ENCODE measurements at regions of chr6 and their contacts with region 1.

Region 1: DNA sequence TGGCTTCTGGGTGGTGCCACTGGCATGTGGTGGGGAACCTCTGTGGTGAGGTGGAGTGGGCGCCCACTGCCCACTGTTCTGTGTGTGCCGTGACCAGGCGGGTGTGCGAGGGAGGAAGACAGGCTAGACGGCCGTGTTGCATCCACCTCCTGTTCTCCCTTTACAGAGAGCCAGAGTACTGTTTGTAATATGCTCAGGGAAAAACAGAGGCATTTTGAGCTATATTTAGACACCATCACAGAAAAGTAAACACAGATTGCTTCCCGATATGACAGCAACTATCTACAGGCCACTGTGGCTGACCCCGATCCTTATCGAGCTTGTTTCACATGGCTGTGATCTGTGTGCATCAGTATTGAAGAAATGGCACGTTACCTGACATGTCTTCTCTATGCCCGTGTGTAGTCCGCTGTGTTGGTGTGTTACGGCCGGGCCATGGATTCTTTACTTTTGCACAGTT is 45.6 kb downstream of the ARID1B start:
- DNase-seq: no peak
- ATAC-seq: no peak
- H3K4me3 ChIP-seq: no peak overlapping the region
- H3K4me3 Mint-ChIP-seq: no peak overlapping the region
- H3K27ac ChIP-seq: no peak overlapping the region
- H3K27ac Mint-ChIP-seq: no peak overlapping the region
- H3K4me1 ChIP-seq: peaks cover 4 to 41% of the 10 kb centered on the region in 2 experiments
- H3K4me1 Mint-ChIP-seq: peaks cover 88 to 97% (median 90%) of the 10 kb centered on the region in 3 donors
- H3K27me3 ChIP-seq: no peaks in the 10 kb centered on the region
- H3K27me3 Mint-ChIP-seq: no peaks in the 10 kb centered on the region

Region 2: DNA sequence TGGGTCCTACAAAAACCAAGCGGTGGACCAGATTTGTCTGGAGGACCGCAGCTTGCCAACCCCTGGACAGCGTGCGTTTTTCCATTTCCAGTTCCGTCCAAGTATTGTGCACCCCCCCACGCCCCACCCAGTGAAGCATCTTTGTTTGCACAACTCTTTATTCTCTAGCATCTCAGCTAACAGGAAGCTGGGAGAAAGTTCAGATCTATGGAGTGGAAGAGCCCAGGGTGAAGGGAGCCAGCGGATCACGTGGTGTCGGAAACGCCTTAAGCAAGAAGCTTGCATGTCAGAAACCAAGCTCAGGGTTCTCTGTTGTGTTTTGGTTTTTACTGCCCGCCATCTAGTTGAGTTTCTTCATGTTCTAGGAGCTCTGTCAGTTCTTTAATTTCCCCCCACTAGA is 15.7 kb before region 1 on chr6:
- CTCF ChIA-PET with region 1: no interaction called
- POLR2A ChIA-PET with region 1: interaction called, 9 to 16 read pairs
- DNase-seq: no peak
- ATAC-seq: peak in 1 of 4 experiments; percentile 28
- H3K4me3 ChIP-seq: no peak overlapping the region
- H3K4me3 Mint-ChIP-seq: peak overlapping the region in 2 of 3 donors; percentile 21 to 56
- H3K27ac ChIP-seq: no peak overlapping the region
- H3K27ac Mint-ChIP-seq: peak overlapping the region; percentile 39 to 52
- H3K4me1 ChIP-seq: peaks cover 24 to 34% of the 10 kb centered on the region in 2 experiments
- H3K4me1 Mint-ChIP-seq: peaks cover 90 to 94% (median 91%) of the 10 kb centered on the region in 3 donors
- H3K27me3 ChIP-seq: no peaks in the 10 kb centered on the region
- H3K27me3 Mint-ChIP-seq: no peaks in the 10 kb centered on the region

Region 3: GRCh38 chr6:156873654-156874380 is 51.0 kb after region 1 on chr6:
- CTCF ChIA-PET with region 1: no interaction called
- POLR2A ChIA-PET with region 1: no interaction called
- DNase-seq: no peak
- ATAC-seq: no peak
- H3K4me3 ChIP-seq: no peak overlapping the region
- H3K4me3 Mint-ChIP-seq: no peak overlapping the region
- H3K27ac ChIP-seq: no peak overlapping the region
- H3K27ac Mint-ChIP-seq: no peak overlapping the region
- H3K4me1 ChIP-seq: peaks cover 0 to 30% of the 10 kb centered on the region in 2 experiments
- H3K4me1 Mint-ChIP-seq: peaks cover 75 to 84% (median 81%) of the 10 kb centered on the region in 3 donors
- H3K27me3 ChIP-seq: no peaks in the 10 kb centered on the region
- H3K27me3 Mint-ChIP-seq: no peaks in the 10 kb centered on the region

Measured in T-cell (primary cell).